Right ventricle myocardium inferior (tissue), 1 donor: ENCODE measurements at regions of chr7 and their contacts with region 1.

Region 1: DNA sequence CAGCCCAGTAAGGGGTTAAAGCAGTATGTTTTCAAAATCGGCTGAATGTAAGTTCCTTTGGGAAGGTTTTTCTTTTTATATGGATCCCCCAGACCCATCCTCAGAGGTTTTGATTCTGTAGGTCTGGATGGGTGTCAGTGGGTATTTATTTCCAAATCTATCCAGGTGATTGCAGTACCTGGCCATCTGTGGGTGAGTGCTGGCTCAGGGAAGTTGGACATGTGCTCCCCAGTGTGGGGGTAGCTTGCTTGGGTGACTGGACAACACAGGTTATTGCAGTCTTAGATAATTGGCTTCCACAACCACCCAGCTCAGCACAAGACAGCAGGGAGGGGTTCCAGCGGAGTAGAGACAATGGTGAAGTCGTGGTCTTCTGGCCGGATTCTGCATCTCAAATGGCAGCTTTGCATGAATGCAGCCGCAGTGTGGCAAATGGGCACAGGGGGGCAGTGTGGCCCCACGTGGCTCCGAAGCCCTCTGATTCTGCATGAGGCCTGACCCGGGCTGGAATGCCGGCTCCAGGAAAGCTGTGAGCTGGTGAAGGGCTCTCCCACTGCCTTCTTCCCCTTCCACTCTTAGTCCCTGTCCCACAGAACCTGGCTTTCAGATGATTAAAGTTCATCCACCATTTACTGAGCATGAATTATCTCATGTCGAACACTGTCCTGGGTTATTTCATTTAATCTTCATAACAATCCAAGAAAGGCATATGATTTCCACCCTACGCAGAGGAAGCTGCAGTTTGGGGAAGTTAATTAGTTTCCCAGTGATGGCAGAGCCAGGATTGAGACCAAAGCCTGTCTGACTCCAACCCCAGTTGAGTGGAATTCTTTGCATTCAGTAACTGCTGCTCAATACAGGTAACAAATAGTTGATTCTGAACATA is 64.5 kb upstream of the SYPL1 start:
- DNase-seq: peak; percentile 90
- ATAC-seq: peak; percentile 83

Region 2: GRCh38 chr7:105623378-105623777 is 553.3 kb before region 1 on chr7:
- intact Hi-C with region 1: no loop called
- DNase-seq: no peak
- ATAC-seq: no peak

Region 3: DNA sequence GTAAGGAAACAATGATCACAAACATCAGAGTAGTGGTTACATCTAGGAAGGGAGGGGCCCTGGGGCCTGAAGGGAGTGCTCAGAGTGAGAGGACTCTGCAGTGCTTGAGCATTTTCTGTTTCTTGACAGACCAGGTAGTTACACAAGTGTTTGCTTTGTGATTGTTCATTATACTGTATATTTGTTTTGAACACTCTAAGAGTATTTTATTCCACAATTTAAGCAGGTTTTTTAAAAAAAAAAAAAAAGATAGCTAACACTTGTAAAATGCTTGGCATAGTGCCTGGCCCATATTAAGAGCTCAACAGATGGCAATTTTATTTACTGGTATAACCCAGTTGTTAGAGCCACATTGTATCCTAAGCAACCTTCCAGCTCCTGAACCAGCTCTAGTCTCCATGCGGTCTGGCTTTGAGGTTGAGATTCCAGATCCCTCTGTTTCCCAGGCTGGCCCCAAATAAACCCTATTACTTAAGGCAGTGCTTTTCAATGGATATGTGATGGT is 280.2 kb before region 1 on chr7:
- intact Hi-C with region 1: no loop called
- DNase-seq: no peak
- ATAC-seq: no peak

Region 4: DNA sequence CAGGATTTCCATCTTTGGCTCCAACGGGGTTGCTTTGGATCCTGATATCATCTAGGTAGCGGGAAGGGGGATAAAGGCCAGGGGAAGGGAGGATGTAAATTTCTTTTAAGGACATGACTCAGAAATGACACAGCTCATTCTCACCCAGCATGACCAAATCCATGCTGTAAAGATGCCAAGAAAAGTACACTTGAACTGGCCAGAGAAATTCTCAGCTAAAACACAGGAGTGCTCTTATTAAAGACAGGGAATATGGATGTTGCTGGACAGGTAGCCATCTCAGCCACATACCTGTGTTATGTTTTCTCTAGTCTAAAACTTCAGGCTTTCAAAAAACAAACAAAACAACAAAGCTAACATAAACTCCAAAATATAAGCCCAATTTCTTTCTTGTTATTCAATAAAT is 39.9 kb after region 1 on chr7:
- intact Hi-C with region 1: loop called (anchors 2 kb)
- DNase-seq: no peak
- ATAC-seq: peak; percentile 80

Region 5: DNA sequence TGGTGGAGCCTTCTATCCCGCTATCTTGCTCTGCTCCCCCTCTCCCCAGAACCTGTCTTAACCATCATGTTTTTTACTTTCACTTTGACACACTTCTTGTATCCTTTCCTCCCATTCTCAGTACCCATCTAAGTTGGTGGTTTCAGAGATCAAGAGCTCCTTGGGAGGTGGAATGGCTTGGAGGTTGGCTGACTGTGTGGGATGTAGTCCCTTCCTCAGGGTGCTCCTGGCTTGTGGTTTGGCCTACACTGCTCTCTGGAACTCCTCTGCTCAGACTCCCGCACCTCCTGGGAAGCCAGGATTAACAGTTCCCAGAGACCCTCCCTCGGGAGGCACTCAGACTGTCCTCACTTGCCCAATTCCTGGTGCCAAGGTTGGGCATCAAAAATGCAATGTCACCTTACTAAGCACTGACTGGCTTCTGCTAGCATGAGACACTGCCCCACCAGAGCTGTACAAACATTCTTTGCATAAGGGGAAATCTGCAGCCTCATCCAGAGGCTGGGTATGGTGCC is 201.2 kb after region 1 on chr7:
- intact Hi-C with region 1: loop called (anchors 5 kb)
- DNase-seq: no peak
- ATAC-seq: no peak

Region 6: GRCh38 chr7:106461993-106462859 is 285.6 kb after region 1 on chr7:
- intact Hi-C with region 1: loop called (anchors 1 kb)
- DNase-seq: no peak
- ATAC-seq: no peak

Region 7: DNA sequence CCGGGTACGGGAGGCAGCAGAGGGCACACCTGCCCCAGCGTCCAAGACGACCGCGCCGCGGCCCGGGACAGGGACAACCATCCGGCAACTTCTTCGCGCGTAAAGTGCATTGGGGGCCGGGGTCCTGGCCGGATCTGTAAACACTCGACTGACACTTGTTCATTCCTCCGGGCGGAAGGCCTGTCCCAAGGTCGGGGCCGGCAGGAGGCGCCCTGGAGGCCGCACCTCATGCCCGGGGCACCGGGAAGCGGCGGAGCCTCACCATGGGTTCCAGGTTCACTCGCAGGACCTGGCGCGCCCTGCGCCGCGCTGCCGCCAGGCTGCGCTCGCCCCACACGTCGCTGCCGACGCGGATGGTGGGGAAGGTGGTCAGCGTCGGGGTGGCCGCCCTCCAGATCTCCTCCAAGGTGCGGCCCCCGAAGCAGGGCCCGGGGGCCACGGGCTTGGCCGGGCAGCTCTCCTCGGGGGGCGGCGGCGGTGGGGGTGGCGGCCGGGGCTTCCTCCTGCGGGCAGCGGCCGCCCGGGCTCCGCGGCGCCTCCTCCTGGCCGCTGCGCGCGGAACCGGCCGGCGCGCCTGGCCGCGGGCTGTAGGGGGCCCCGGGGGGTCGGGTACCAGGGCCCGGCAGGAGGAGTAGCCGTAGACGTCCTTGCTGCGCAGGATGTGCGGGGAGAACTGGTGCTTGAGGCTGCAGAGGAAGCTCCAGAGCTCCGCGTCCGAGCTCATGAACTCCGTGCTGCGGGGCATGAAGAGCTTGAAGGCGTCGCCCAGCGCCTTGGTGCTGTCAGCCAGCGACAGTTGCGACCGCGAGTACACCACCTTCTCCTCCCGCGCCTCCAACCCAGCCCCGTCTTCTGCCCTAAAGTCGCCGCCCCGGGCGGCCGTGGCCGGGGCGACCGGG is 483.6 kb after region 1 on chr7:
- intact Hi-C with region 1: loop called (anchors 5 kb)
- DNase-seq: peak; percentile 91
- ATAC-seq: peak; percentile 56

Region 8: GRCh38 chr7:106736508-106737201 is 560.0 kb after region 1 on chr7:
- intact Hi-C with region 1: loop called (anchors 1 kb)
- DNase-seq: no peak
- ATAC-seq: no peak